ENCODE measurements at regions of chr12 and their contacts with region 1.

Region 1: GRCh38 chr12:10749700-10750384 is 26.7 kb upstream of the YBX3 start:
- DNase-seq: peak; percentile 83 to 85
- H3K4me3 ChIP-seq: peak overlapping the region; percentile 48
- H3K27ac ChIP-seq: no peak overlapping the region
- H3K4me1 ChIP-seq: no peaks in the 10 kb centered on the region
- H3K27me3 ChIP-seq: no peaks in the 10 kb centered on the region
- CTCF ChIP-seq: peak; percentile 93

Region 2: DNA sequence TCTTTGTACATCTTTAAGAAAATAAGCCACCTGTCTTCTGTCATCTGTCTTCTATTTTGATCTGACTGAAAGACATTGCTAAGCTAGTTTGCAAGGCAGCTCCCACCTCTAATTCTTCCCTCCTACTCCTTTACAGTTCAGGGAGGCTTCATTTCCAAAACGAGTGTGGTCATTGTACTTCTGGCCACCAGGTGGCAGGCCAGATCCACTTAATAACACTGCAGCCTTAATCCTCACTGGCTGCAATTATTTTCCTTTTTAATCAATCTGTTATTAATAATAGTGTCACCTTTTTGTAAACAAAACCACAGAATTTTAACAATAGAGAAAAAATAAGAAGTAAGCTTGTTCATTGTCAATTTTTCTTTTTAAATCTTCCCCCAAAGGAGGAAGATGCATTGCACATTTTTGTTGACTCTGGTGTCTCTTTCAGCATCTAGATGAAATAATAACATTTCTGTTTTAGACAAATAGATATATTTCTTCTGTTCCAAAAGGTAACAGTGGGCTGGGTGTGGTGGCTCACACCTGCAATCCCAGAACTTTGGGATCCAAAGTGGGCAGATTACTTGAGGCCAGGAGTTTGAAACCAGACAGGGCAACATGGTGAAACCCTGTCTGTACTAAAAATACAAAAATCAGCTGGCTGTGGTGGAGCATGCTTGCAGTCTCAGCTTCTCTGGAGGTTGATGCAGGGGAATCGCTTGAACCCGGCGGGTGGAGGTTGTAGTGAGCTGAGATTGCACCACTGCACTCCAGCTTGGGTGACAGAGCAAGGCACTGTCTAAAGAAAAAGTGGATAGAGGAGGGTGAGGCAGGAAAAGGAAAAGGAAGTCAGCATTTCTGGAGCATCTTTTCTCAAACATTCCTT is 513.8 kb before region 1 on chr12:
- CTCF ChIA-PET with region 1: no interaction called
- POLR2A ChIA-PET with region 1: no interaction called
- intact Hi-C with region 1: loop called (anchors 1 kb)
- DNase-seq: peak; percentile 32 to 43
- H3K4me3 ChIP-seq: no peak overlapping the region
- H3K27ac ChIP-seq: no peak overlapping the region
- H3K4me1 ChIP-seq: no peaks in the 10 kb centered on the region
- H3K27me3 ChIP-seq: no peaks in the 10 kb centered on the region
- CTCF ChIP-seq: peak; percentile 96

Region 3: GRCh38 chr12:10364815-10365622 is 384.8 kb before region 1 on chr12:
- CTCF ChIA-PET with region 1: no interaction called
- POLR2A ChIA-PET with region 1: no interaction called
- intact Hi-C with region 1: loop called (anchors 10 kb)
- DNase-seq: peak; percentile 73 to 79
- H3K4me3 ChIP-seq: peak overlapping the region; percentile 77
- H3K27ac ChIP-seq: peak overlapping the region; percentile 63
- H3K4me1 ChIP-seq: peaks cover 30% of the 10 kb centered on the region
- H3K27me3 ChIP-seq: no peaks in the 10 kb centered on the region
- CTCF ChIP-seq: no peak

Region 4: GRCh38 chr12:10613349-10614055 is 136.3 kb before region 1 on chr12 and contains the start of gene MAGOHB:
- CTCF ChIA-PET with region 1: no interaction called
- POLR2A ChIA-PET with region 1: interaction called, 4 read pairs
- intact Hi-C with region 1: loop called (anchors 2 kb)
- DNase-seq: peak; percentile 86 to 97
- H3K4me3 ChIP-seq: peak within 1 kb of the TSS; percentile 90
- H3K27ac ChIP-seq: peak within 1 kb of the TSS; percentile 85
- H3K4me1 ChIP-seq: peaks cover 29% of the 10 kb centered on the region
- H3K27me3 ChIP-seq: no peaks in the 10 kb centered on the region
- CTCF ChIP-seq: no peak
- total RNA-seq, gene MAGOHB: 53.8 and 91.4 TPM in 2 replicates

Region 5: DNA sequence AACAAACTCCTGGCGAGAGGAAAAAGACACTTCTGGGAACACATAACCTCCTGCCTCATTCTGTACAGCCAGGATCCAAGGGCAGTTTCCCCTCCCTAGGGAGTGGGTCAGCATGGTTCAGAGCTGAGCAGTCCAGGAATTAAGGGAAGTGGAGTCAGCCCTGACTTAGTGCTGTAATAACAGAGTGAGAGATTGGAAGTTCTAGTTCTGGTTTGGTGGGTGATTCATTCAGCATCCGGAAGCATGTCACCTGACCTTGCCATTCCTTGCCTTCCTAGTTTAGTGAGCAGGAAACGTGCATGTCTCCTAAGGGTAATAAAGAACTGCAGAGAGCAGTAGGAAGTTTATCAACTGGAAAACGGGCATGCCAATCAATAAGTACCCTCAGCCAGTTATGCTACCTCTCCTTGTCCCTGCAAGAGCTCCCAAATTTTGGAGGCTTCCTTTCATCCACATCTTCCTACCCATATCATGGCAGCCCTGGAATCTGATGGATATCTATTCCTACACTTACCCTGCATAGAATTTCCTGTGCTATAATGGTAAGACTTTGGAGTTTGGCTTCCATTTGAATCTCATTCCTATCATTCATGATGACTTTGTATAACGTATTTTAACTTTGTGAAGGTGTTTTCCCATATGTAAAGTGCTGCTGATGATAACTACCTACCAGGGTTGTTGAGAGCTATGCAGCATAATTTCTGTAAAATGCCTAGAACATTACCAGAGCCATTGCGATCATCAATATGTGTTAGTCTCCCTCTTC is 107.9 kb before region 1 on chr12:
- CTCF ChIA-PET with region 1: no interaction called
- POLR2A ChIA-PET with region 1: no interaction called
- intact Hi-C with region 1: no loop called
- DNase-seq: peak in 1 of 2 experiments; percentile 18
- H3K4me3 ChIP-seq: no peak overlapping the region
- H3K27ac ChIP-seq: no peak overlapping the region
- H3K4me1 ChIP-seq: peaks cover 3% of the 10 kb centered on the region
- H3K27me3 ChIP-seq: no peaks in the 10 kb centered on the region
- CTCF ChIP-seq: no peak

Region 6: GRCh38 chr12:10721651-10722501 is 28.0 kb before region 1 on chr12:
- CTCF ChIA-PET with region 1: interaction called, 13 read pairs
- POLR2A ChIA-PET with region 1: no interaction called
- intact Hi-C with region 1: loop called (anchors 1 kb)
- DNase-seq: peak; percentile 93
- H3K4me3 ChIP-seq: peak overlapping the region; percentile 77
- H3K27ac ChIP-seq: peak overlapping the region; percentile 95
- H3K4me1 ChIP-seq: peaks cover 65% of the 10 kb centered on the region
- H3K27me3 ChIP-seq: no peaks in the 10 kb centered on the region
- CTCF ChIP-seq: no peak

Region 7: DNA sequence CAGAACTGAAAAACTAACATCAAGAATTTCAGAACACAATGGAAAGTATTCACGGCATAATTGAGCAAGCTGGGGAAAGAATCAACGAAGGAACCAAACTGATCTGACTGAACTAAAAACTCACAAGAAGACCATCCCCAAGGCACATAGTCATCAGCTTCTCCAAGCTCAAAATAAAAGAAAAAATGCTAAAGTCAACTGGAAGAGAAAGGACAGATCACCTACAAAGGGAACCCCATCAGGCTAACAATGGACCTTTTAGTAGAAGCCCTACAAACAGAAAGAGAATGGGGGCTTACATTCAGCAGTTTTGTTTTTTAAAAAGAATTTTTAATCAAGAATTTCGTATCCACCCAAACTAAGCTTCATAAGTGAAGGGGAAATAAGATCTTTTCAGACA is 225.1 kb after region 1 on chr12:
- CTCF ChIA-PET with region 1: no interaction called
- POLR2A ChIA-PET with region 1: no interaction called
- intact Hi-C with region 1: no loop called
- DNase-seq: no peak
- H3K4me3 ChIP-seq: no peak overlapping the region
- H3K27ac ChIP-seq: no peak overlapping the region
- H3K4me1 ChIP-seq: no peaks in the 10 kb centered on the region
- H3K27me3 ChIP-seq: no peaks in the 10 kb centered on the region
- CTCF ChIP-seq: no peak

Region 8: GRCh38 chr12:10986812-10987211 is 237.0 kb after region 1 on chr12 and contains the start of gene TAS2R50:
- CTCF ChIA-PET with region 1: no interaction called
- POLR2A ChIA-PET with region 1: no interaction called
- intact Hi-C with region 1: no loop called
- DNase-seq: no peak
- H3K4me3 ChIP-seq: no peak within 1 kb of the TSS
- H3K27ac ChIP-seq: no peak within 1 kb of the TSS
- H3K4me1 ChIP-seq: no peaks in the 10 kb centered on the region
- H3K27me3 ChIP-seq: no peaks in the 10 kb centered on the region
- CTCF ChIP-seq: no peak
- total RNA-seq, gene TAS2R50: 1.6 and 2.3 TPM in 2 replicates